Heart left ventricle (tissue), 16 donors: ENCODE measurements at regions of chr11 and their contacts with region 1.

Region 1: DNA sequence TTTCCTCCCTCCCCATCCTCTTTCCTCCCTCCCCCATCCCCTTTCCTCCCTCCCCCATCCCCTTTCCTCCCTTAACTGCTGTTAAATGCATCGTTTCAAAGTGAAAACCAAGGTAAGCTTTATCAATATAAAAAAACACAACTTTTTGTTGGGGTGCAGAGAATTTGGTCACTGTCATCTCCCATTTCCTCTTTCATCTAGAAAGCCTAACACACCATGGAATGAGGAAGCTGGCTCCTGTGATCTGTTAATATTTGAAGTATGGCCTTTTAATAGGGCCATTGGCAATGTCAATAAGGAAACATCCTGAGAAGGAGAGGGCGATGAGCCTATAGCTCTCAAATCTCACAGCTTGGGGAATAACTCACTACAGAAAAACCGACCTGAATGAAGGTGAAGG is 7.0 kb downstream of the EXPH5 start:
- DNase-seq: no peak
- ATAC-seq: no peak
- H3K4me3 ChIP-seq: no peak overlapping the region
- H3K27ac ChIP-seq: no peak overlapping the region
- H3K4me1 ChIP-seq: no peaks in the 10 kb centered on the region
- H3K27me3 ChIP-seq: no peaks in the 10 kb centered on the region
- CTCF ChIP-seq: no peak
- POLR2A ChIP-seq: no peak

Region 2: DNA sequence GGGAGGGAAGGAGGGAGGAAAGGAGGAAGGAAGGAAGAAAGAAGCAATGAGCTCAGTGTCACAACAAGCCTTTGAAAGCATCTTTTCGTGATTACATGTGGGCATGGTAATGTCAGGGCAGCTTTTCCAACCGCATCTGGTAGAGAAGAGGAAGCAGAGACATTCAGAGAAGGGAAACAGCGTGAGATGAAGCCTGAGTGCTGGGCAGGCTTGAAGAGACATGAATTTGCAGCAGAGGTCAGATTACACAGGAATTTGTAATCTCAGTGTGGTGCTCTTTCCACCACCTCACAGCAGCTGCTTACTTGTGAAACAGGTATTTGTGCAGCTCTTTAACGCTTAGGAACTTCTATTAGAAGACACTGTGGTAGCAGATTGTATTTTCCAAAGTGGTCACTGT is 545.9 kb after region 1 on chr11:
- intact Hi-C with region 1: loop called in 1 of 10 experiments (anchors 10 kb)
- DNase-seq: no peak
- ATAC-seq: no peak
- H3K4me3 ChIP-seq: no peak overlapping the region
- H3K27ac ChIP-seq: no peak overlapping the region
- H3K4me1 ChIP-seq: no peaks in the 10 kb centered on the region
- H3K27me3 ChIP-seq: no peaks in the 10 kb centered on the region
- CTCF ChIP-seq: no peak
- POLR2A ChIP-seq: no peak